ENCODE measurements at regions of chr17 and their contacts with region 1.

Region 1: DNA sequence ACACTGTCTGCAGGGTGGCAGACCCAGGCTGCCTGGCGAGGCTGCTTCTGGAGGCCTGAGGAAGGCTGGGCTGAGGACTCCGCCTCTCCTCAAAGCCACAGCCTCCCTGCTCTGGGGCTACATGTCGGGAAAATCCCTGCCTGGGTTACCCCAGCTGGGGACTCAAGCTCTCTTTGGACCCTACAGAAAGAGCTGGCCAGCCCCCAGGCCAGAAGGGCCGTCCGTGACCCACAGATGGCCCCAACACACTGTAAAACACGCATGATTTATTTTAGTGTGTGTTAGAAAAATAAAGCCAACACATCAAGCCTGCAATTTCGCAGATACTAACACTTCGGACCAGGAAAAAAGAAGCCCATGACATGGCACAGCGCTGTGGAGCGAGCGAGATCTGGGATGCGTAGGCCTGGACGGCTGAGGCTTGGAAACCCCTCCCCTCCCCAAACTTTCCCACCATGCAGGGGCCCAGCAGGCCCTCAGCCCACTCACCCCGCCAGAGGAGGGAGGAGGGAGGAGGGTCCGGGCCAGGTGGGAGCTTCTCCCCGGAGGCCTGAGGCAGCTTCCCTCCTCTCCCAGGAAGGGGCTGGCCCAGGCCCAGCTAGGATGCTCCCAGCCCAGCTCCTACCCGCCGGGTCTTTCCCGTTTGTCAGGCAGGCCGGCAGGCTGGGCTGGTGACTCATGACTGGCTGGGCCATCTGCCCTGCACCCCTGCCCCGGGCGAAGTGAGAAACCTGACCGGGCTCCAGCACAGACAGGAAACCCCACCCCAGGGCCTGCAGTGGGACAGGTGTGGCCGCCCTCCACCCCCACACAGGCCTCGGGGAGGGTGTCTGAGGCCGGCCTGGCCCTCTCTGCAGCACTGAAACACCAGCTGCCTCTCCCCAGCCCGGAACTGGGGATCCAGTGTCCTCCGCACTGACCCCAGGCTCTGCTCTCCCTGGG is 34.1 kb upstream of the SLC38A10 start:
- DNase-seq: peak; percentile 99
- H3K4me3 Mint-ChIP-seq: peak overlapping the region; percentile 64
- H3K27ac Mint-ChIP-seq: peak overlapping the region; percentile 80
- H3K4me1 Mint-ChIP-seq: peaks cover 28% of the 10 kb centered on the region
- H3K27me3 Mint-ChIP-seq: no peaks in the 10 kb centered on the region
- CTCF ChIP-seq: no peak

Region 2: GRCh38 chr17:81309070-81309905 is 20.0 kb before region 1 on chr17:
- CTCF ChIA-PET with region 1: interaction called, 12 read pairs
- POLR2A ChIA-PET with region 1: interaction called, 12 read pairs
- intact Hi-C with region 1: no loop called
- DNase-seq: peak; percentile 74
- H3K4me3 Mint-ChIP-seq: peak overlapping the region; percentile 68
- H3K27ac Mint-ChIP-seq: peak overlapping the region; percentile 32
- H3K4me1 Mint-ChIP-seq: peaks cover 22% of the 10 kb centered on the region
- H3K27me3 Mint-ChIP-seq: no peaks in the 10 kb centered on the region
- CTCF ChIP-seq: peak; percentile 32

Region 3: GRCh38 chr17:81346090-81346907 is 17.1 kb after region 1 on chr17:
- CTCF ChIA-PET with region 1: no interaction called
- POLR2A ChIA-PET with region 1: interaction called, 21 read pairs
- intact Hi-C with region 1: no loop called
- DNase-seq: peak; percentile 95
- H3K4me3 Mint-ChIP-seq: peak overlapping the region; percentile 95
- H3K27ac Mint-ChIP-seq: no peak overlapping the region
- H3K4me1 Mint-ChIP-seq: peaks cover 16% of the 10 kb centered on the region
- H3K27me3 Mint-ChIP-seq: no peaks in the 10 kb centered on the region
- CTCF ChIP-seq: no peak

Region 4: GRCh38 chr17:81365148-81365600 is 35.9 kb after region 1 on chr17:
- CTCF ChIA-PET with region 1: interaction called, 3 read pairs
- POLR2A ChIA-PET with region 1: interaction called, 11 read pairs
- intact Hi-C with region 1: no loop called
- DNase-seq: peak; percentile 90
- H3K4me3 Mint-ChIP-seq: peak overlapping the region; percentile 60
- H3K27ac Mint-ChIP-seq: peak overlapping the region; percentile 69
- H3K4me1 Mint-ChIP-seq: peaks cover 24% of the 10 kb centered on the region
- H3K27me3 Mint-ChIP-seq: no peaks in the 10 kb centered on the region
- CTCF ChIP-seq: no peak

Region 5: GRCh38 chr17:81636505-81637288 is 307.4 kb after region 1 on chr17 and contains the starts of genes NPLOC4 and TSPAN10:
- CTCF ChIA-PET with region 1: no interaction called
- POLR2A ChIA-PET with region 1: no interaction called
- intact Hi-C with region 1: no loop called
- DNase-seq: peak; percentile 86
- H3K4me3 Mint-ChIP-seq: peak within 1 kb of the TSS; percentile 89
- H3K27ac Mint-ChIP-seq: peak within 1 kb of the TSS; percentile 96
- H3K4me1 Mint-ChIP-seq: peaks cover 9% of the 10 kb centered on the region
- H3K27me3 Mint-ChIP-seq: no peaks in the 10 kb centered on the region
- CTCF ChIP-seq: no peak
- total RNA-seq, gene NPLOC4: 83.9 and 95.1 TPM in 2 replicates
- total RNA-seq, gene TSPAN10: 1.8 and 2.1 TPM in 2 replicates

Measured in MCF 10A (cell line).